ENCODE measurements at regions of chr22 and their contacts with region 1.

Region 1: DNA sequence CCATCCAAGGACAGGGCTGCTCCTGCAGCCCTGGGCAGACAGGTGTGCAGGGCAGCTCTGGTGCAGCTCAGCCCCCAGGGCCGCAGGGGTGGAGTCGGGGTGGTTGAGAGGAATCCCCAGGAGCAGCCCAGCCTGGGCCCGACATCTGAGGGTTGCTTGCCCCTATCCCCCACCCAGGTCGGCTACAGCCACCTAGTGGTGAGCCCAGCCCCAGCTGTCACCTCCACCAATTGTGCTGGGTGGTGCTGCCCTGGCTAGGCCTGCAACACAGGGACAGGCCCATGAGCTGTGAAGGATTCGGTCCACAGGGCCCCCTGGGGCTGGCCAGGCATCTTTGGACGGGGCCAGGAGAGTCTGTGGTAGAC is 29.6 kb downstream of the RTN4R start:
- DNase-seq: no peak
- ATAC-seq: peak; percentile 27; the same call in 1 of the 2 replicates
- H3K4me3 ChIP-seq: no peak overlapping the region
- H3K27ac ChIP-seq: no peak overlapping the region
- H3K4me1 ChIP-seq: peaks cover 3% of the 10 kb centered on the region
- H3K27me3 ChIP-seq: peaks cover 20% of the 10 kb centered on the region; the same call in 1 of the 2 replicates
- CTCF ChIP-seq: peak; percentile 25; the same call in 1 of the 2 replicates
- POLR2A ChIP-seq: no peak
- RAD21 ChIP-seq: no peak

Region 2: DNA sequence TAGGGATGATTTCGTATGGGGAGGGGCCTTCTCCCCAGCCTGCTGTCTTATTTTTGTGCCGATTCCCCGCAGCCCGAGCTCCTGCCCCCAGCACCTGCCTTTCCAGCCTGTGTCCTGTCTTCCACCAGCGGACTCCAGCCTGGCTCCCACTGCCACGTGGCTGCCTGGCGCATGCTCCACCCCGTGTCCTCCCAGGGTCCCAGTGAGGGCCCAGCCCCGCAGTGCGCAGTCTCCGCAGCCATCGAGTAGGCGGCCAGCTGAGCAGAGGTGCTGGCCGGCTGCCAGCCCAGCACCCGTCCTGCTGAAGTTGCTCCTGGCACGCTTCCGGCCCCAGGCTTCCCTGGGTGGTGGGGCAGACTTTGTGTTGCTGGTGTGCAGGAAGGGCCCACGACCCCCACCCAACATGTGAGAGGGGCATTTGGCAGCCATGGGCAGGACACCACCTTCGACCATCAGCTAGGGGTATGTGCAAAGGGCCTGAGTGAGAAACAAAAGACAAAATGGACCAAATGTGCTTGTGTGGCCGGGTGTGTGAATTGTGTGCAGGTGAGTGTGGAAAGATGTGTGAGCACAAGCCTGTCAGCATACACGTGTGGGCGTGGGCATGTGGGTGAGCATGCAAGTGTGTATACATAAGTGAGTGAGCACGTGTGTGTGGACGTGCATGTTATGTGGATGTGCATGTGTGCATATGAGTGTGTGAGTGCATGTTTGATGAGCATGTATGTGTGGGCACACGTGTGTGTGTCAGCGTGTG is 26.3 kb before region 1 on chr22:
- CTCF ChIA-PET with region 1: no interaction called
- POLR2A ChIA-PET with region 1: no interaction called
- dilution Hi-C with region 1: no loop called
- in situ Hi-C with region 1: no loop called
- intact Hi-C with region 1: loop called (anchors 2 kb)
- DNase-seq: peak; percentile 7
- ATAC-seq: no peak
- H3K4me3 ChIP-seq: no peak overlapping the region
- H3K27ac ChIP-seq: no peak overlapping the region
- H3K4me1 ChIP-seq: peaks cover 2% of the 10 kb centered on the region; the same call in 1 of the 2 replicates
- H3K27me3 ChIP-seq: peaks cover 4% of the 10 kb centered on the region; the same call in 1 of the 2 replicates
- CTCF ChIP-seq: no peak
- POLR2A ChIP-seq: no peak
- RAD21 ChIP-seq: no peak

Measured in IMR-90 (cell line).